Naive thymus-derived CD8-positive, alpha-beta T cell (primary cell): ENCODE measurements at regions of chr11 and their contacts with region 1.

Region 1: DNA sequence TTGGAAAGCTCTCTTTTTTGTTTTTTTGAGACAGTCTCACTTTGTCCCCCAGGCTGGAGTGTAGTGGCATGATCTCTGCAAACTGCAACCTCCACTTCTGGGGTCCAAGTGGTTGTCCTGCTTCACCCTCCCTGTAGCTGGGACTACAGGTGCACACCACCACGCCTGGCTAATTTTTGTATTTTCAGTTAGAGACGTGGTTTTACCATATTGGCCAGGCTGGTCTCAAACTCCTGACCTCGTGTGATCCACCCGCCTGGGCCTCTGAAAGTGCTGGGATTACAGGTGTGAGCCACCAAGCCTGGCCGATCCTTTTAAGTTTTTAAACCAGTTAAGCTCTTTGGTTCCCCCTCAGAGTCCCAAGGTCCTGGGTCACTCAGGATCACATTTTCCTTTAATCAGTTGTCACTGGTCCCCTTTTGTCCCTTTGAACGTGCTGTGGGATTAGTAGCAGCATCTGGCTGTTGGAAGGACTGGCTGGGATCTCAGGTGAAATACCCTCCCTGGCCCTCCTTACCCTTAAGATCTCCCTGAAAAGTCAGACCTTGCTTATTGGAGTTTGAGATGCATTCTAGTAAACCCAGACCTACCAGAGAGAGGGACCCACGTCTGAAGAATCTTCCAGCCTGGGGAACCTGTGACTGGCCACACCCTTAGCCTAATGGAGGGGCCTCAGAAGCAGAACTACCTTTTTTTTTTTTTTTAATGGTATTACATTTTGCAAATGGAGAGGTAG is 8.1 kb downstream of the MALAT1 start:
- DNase-seq: peak in 5 of 10 donors; percentile 50 to 57 (median 56)
- ATAC-seq: peak; percentile 36 to 55
- H3K4me3 Mint-ChIP-seq: no peak overlapping the region
- H3K27ac Mint-ChIP-seq: peak overlapping the region in 9 of 10 donors; percentile 67 to 95 (median 89)
- H3K4me1 Mint-ChIP-seq: peaks cover 38 to 66% (median 58%) of the 10 kb centered on the region in 4 donors
- H3K27me3 Mint-ChIP-seq: no peaks in the 10 kb centered on the region

Region 2: DNA sequence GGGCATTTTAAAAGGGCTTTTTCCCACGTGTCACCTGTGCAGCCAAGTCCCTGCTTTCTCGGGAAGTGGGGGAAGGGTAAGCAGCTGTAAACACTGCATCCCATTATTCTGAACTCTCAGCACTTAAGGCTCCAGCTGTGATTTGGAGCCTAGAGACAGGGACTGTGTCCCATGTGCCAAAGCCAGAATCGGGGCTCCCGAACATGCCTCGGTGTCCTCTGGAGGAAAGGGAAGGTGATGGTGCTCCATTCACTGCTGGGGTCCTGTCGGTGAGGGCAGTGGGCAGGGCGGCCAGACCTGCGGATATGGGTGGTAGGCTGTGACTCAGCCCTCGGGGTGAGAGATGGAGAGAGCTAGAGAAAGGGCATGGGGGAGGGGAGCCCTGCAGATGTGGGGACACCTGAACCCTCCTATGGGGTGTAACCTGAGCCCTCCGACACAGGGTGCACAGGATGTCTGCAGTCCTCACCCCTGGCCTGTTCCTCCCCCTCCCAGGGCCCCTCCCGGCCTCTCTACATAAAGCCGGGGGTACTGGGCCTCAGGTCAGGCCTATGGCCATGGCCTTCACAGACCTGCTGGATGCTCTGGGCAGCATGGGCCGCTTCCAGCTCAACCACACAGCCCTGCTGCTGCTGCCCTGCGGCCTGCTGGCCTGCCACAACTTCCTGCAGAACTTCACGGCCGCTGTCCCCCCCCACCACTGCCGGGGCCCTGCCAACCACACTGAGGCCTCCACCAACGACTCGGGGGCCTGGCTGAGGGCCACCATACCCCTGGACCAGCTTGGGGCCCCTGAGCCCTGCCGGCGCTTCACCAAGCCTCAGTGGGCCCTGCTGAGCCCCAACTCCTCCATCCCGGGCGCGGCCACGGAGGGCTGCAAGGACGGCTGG is 293.4 kb before region 1 on chr11:
- POLR2A ChIA-PET with region 1: no interaction called
- DNase-seq: peak in 3 of 10 donors; percentile 17 to 30 (median 18)
- ATAC-seq: peak; percentile 58 to 82
- H3K4me3 Mint-ChIP-seq: peak overlapping the region in 7 of 10 donors; percentile 19 to 73 (median 60)
- H3K27ac Mint-ChIP-seq: peak overlapping the region in 6 of 10 donors; percentile 48 to 79 (median 64)
- H3K4me1 Mint-ChIP-seq: peaks cover 20 to 40% (median 33%) of the 10 kb centered on the region in 4 donors
- H3K27me3 Mint-ChIP-seq: no peaks in the 10 kb centered on the region

Region 3: GRCh38 chr11:65440831-65441499 is 66.0 kb before region 1 on chr11:
- POLR2A ChIA-PET with region 1: interaction called, 10 read pairs
- DNase-seq: no peak
- ATAC-seq: no peak
- H3K4me3 Mint-ChIP-seq: peak overlapping the region in 9 of 10 donors; percentile 1 to 73 (median 49)
- H3K27ac Mint-ChIP-seq: peak overlapping the region in 8 of 10 donors; percentile 25 to 90 (median 82)
- H3K4me1 Mint-ChIP-seq: peaks cover 21 to 79% (median 58%) of the 10 kb centered on the region in 4 donors
- H3K27me3 Mint-ChIP-seq: no peaks in the 10 kb centered on the region